H1 (cell line): ENCODE measurements at regions of chr3 and their contacts with region 1.

Region 1: GRCh38 chr3:46705022-46705530 is 3.9 kb downstream of the TMIE start:
- DNase-seq: peak in 1 of 2 experiments; percentile 88
- H3K4me3 ChIP-seq: no peak overlapping the region
- H3K27ac ChIP-seq: no peak overlapping the region
- H3K4me1 ChIP-seq: peaks cover 0 to 9% (median 2%) of the 10 kb centered on the region in 4 experiments; a peak in 4 of 7 replicates
- H3K27me3 ChIP-seq: peaks cover 2 to 21% (median 19%) of the 10 kb centered on the region in 4 experiments; a peak in 6 of 7 replicates
- CTCF ChIP-seq: peak in 2 of 3 experiments; percentile 90 to 97; a peak in 3 of 4 replicates
- EP300 ChIP-seq: no peak
- POLR2A ChIP-seq: no peak
- RAD21 ChIP-seq: peak; percentile 97 to 98

Region 2: GRCh38 chr3:46208167-46208704 is 496.8 kb before region 1 on chr3 and contains the start of gene CCR1:
- CTCF ChIA-PET with region 1: no interaction called
- POLR2A ChIA-PET with region 1: no interaction called
- DNase-seq: peak; percentile 17 to 54
- H3K4me3 ChIP-seq: no peak within 1 kb of the TSS
- H3K27ac ChIP-seq: no peak within 1 kb of the TSS
- H3K4me1 ChIP-seq: peaks cover 0 to 2% (median 0%) of the 10 kb centered on the region in 4 experiments; a peak in 2 of 7 replicates
- H3K27me3 ChIP-seq: no peaks in the 10 kb centered on the region
- CTCF ChIP-seq: peak; percentile 65 to 83 (median 74)
- EP300 ChIP-seq: no peak
- POLR2A ChIP-seq: no peak
- RAD21 ChIP-seq: peak; percentile 72 to 77
- total RNA-seq, gene CCR1: not detected in 2 replicates

Region 3: DNA sequence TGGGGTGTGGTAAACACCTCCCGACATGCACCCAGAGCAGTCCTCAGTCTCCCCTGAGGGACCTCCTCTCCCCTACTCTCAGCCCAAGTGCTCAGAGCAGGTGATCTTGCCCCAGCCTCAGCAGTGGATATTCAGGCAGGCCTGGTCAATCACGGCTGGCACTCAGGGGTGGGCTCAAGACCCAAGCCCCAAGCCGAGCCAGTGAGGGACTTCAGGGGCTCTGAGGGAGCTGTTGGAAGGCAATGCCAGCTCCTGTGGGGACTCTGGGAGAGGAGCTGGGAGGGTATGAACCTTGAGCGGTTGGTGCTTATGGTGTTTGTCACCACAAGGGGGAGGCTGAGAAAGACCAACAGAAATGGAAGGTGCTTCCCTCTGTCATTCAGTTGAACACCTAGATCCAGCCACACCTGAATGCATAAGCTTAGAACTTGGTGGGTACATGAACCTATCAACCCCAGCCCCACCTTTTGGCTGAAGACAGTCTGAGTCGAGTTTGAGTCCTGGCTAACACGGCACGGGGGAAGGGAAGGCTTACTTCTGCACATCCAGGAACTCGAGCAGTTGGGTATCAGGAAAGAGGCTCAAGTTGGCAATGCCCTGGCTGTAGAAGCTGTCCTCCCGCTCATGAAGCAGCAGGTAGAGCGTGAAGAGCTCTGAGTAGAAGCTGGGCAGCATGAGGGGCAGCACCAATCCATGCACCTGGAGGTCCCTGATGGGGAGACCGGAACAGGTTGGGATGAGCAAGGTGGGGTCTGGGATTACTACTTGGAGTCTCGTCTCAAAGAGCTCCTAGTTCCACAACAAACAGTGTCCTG is 30.8 kb before region 1 on chr3:
- CTCF ChIA-PET with region 1: interaction called, 10 read pairs
- POLR2A ChIA-PET with region 1: interaction called, 3 read pairs
- DNase-seq: no peak
- H3K4me3 ChIP-seq: no peak overlapping the region
- H3K27ac ChIP-seq: no peak overlapping the region
- H3K4me1 ChIP-seq: no peaks in the 10 kb centered on the region; a peak in 1 of 7 replicates
- H3K27me3 ChIP-seq: no peaks in the 10 kb centered on the region
- CTCF ChIP-seq: peak in 2 of 3 experiments; percentile 30 to 53; a peak in 2 of 4 replicates
- EP300 ChIP-seq: no peak
- POLR2A ChIP-seq: no peak
- RAD21 ChIP-seq: peak; percentile 1 to 35; a peak in 1 of 4 replicates